ENCODE measurements at regions of chr19 and their contacts with region 1.

Region 1: DNA sequence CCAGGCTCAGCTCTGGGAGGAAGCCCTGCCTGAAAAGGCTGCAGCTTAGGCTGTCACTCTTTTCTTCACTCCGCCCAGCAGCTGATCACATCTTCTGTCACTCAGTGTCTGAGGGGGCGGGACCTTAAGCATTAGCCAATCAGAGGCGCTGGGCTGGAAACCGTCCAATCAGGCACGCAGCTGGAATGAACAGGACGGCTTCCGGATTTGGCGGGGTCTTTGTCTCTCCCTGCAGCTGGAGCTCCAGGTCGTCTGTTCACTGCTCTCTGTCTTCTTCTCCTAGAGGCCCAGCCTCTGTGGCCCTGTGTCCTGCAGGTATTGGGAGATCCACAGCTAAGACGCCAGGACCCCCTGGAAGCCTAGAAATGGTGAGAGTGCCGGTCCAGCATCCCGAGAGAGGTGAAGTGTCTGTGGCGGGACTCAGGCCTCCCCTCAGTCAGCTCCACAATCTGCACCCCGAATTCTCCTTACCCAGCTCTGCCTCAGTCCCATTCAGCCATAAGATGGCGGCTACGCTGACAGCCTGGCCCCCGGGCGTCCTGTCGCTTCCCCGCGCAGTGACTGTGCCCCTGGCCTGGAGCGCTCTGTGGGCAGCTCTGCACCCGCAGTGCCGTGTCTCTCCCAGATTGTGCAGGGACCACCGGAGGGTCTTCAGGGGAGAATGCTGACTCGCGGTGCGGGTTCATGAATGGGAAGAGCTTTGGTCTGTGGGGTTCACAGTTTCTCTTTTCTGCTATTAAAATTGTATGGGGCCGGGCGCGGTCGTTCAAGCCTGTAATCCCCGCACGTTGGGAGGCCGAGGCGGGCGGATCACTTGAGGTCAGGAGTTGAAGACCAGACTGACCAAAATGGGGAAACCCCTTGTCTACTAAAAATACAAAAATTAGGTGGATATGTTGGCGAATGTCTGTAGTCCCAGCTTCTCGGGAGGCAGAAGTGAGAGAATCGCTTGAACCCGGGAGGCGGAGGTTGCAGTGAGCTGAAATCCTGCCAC is at the start of gene ZNF66:
- DNase-seq: peak; percentile 92 to 95
- ATAC-seq: peak; percentile 100
- H3K4me3 ChIP-seq: peak within 1 kb of the TSS; percentile 78 to 98 (median 88)
- H3K27ac ChIP-seq: peak within 1 kb of the TSS; percentile 27 to 66 (median 54)
- H3K4me1 ChIP-seq: peaks cover 0 to 7% of the 10 kb centered on the region in 2 donors
- H3K27me3 ChIP-seq: no peaks in the 10 kb centered on the region
- CTCF ChIP-seq: no peak
- POLR2A ChIP-seq: peak in 1 of 2 donors; percentile 36
- total RNA-seq, gene ZNF66: 0.82 to 2.1 (median 1.6) TPM in 3 of 4 donors, not detected in the other

Region 2: GRCh38 chr19:20565321-20566018 is 210.9 kb before region 1 on chr19 and contains the start of gene ZNF737:
- in situ Hi-C with region 1: no loop called
- intact Hi-C with region 1: loop called (anchors 2 kb)
- DNase-seq: peak; percentile 79 to 88
- ATAC-seq: peak; percentile 97 to 98
- H3K4me3 ChIP-seq: peak within 1 kb of the TSS; percentile 60 to 81 (median 80)
- H3K27ac ChIP-seq: peak within 1 kb of the TSS; percentile 73 to 86 (median 79)
- H3K4me1 ChIP-seq: no peaks in the 10 kb centered on the region
- H3K27me3 ChIP-seq: no peaks in the 10 kb centered on the region
- CTCF ChIP-seq: peak in 3 of 5 experiments; percentile 10 to 57 (median 28)
- POLR2A ChIP-seq: peak; percentile 25 to 39
- total RNA-seq, gene ZNF737: 0.95 to 5.4 (median 2.2) TPM

Region 3: DNA sequence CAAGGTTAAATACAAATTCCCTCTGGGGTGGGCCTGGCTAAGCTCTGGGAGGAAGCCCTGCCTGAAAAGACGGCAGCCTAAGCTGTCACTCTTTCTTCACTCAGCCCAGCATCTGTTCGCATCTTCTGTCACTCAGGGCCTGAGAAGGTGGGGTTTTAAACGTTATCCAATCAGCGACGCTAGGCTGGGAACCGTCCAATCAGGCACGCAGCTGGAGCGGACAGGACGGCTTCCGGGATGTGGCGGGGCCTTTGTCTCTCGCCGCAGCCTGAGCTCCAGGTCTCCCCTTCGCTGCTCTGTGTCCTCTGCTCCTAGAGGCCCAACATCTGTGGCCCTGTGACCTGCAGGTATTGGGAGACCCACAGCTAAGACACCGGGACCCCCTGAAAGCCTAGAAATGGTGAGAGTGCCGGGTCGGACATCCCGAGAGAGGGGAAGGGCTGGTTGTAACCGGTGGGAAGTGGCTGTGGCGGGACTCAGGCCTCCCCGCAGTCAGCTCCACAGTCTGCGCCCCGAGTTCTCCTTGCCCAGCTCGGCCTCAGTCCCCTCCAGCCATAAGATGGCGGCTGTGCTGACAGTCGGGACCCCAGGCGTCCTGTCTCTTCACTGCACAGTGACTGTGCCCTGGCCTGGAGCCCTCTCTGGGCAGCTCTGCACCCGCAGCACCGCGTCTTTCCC is 365.5 kb after region 1 on chr19 and contains the start of gene ZNF431:
- in situ Hi-C with region 1: no loop called
- intact Hi-C with region 1: loop called (anchors 5 kb)
- DNase-seq: peak; percentile 89 to 93
- ATAC-seq: peak; percentile 100
- H3K4me3 ChIP-seq: peak within 1 kb of the TSS; percentile 66 to 89 (median 82)
- H3K27ac ChIP-seq: peak within 1 kb of the TSS; percentile 72 to 79 (median 78)
- H3K4me1 ChIP-seq: peaks cover 10 to 17% of the 10 kb centered on the region in 2 donors
- H3K27me3 ChIP-seq: no peaks in the 10 kb centered on the region
- CTCF ChIP-seq: no peak
- POLR2A ChIP-seq: peak; percentile 49 to 57
- total RNA-seq, gene ZNF431: 5.1 to 7.6 (median 6.7) TPM